Naive thymus-derived CD8-positive, alpha-beta T cell (primary cell): ENCODE measurements at regions of chr5 and their contacts with region 1.

Region 1: DNA sequence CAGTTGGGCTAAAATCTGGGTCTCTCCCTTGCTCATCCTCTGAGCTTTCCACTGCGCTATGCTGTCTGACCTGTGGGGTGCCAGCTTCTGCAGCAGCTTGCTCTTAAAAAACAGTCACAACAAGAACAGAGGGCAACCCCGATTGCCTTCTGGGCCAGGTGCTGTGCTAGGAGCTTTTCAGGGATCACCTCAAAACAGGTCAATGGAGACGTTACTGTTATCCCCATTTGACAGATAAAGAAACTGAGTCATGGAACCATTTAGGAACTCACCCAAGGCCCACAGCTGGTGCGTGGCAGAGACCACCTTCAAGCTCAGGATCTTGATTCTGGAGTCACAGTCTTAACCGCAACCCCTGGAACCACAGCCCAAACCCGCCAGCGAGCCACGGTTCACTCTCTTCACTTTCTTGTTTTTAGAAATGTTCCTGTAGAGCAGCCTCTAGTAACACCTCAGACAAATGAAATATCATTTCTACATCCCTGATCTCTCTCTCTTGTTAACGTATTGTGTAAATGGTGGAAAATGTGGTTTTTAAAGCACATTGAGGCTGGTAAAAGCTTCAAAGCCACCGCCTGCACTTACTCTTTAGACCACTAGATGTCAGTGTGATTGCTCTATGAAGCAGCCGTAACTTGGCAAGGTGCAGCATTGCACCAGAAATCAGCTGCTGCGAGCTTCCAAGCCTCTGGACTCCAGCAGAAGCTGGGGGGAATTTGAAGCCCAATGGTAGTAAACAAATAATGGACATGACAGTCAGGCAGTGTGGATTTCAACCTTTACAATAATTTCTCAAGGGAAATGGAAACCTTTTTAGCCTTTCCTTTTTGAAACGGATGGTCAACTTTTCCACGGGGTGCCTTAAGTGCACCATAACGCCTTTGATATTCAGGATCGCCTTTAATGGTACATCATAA is 1.7 kb downstream of the FYB1 start:
- DNase-seq: peak; percentile 53 to 90 (median 82)
- ATAC-seq: peak; percentile 72 to 73
- H3K4me3 Mint-ChIP-seq: peak overlapping the region; percentile 77 to 95 (median 84)
- H3K27ac Mint-ChIP-seq: peak overlapping the region; percentile 68 to 97 (median 92)
- H3K4me1 Mint-ChIP-seq: peaks cover 41 to 75% (median 61%) of the 10 kb centered on the region in 4 donors
- H3K27me3 Mint-ChIP-seq: no peaks in the 10 kb centered on the region

Region 2: DNA sequence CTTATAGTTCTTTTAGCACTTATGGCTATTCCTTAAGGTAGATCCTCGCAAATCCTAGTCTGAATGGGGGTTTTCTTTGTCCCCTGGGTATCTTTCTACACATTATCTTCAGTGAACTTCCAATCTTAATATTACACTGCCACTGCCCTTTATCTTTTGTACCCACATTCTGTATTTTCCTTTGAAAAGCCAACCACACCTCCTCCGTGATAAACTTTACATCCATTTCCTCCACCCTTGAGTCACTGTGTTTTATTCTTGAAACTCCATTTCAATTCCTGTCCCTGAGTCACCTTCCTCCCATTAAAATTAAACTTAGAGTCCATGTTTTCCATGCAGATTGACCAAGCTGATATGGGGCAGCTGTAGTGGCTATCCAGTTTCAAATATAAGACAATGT is 100.2 kb before region 1 on chr5:
- POLR2A ChIA-PET with region 1: no interaction called
- DNase-seq: no peak
- ATAC-seq: no peak
- H3K4me3 Mint-ChIP-seq: peak overlapping the region in 1 of 10 donors; percentile 42
- H3K27ac Mint-ChIP-seq: peak overlapping the region in 9 of 10 donors; percentile 64 to 92 (median 79)
- H3K4me1 Mint-ChIP-seq: peaks cover 15 to 35% (median 23%) of the 10 kb centered on the region in 4 donors
- H3K27me3 Mint-ChIP-seq: no peaks in the 10 kb centered on the region

Region 3: GRCh38 chr5:39158127-39158593 is 59.5 kb before region 1 on chr5:
- POLR2A ChIA-PET with region 1: interaction called, 10 read pairs
- DNase-seq: no peak
- ATAC-seq: no peak
- H3K4me3 Mint-ChIP-seq: peak overlapping the region in 7 of 10 donors; percentile 1 to 76 (median 56)
- H3K27ac Mint-ChIP-seq: peak overlapping the region; percentile 48 to 95 (median 76)
- H3K4me1 Mint-ChIP-seq: peaks cover 47 to 91% (median 83%) of the 10 kb centered on the region in 4 donors
- H3K27me3 Mint-ChIP-seq: no peaks in the 10 kb centered on the region

Region 4: GRCh38 chr5:39177631-39177964 is 40.0 kb before region 1 on chr5:
- POLR2A ChIA-PET with region 1: interaction called, 78 read pairs
- DNase-seq: peak in 4 of 10 donors; percentile 66 to 85 (median 74)
- ATAC-seq: peak; percentile 62 to 74
- H3K4me3 Mint-ChIP-seq: peak overlapping the region; percentile 63 to 87 (median 75)
- H3K27ac Mint-ChIP-seq: peak overlapping the region; percentile 90 to 98 (median 95)
- H3K4me1 Mint-ChIP-seq: peaks cover 50 to 99% (median 97%) of the 10 kb centered on the region in 4 donors
- H3K27me3 Mint-ChIP-seq: no peaks in the 10 kb centered on the region

Region 5: GRCh38 chr5:39194466-39195136 is 23.0 kb before region 1 on chr5:
- POLR2A ChIA-PET with region 1: interaction called, 124 read pairs
- DNase-seq: no peak
- ATAC-seq: no peak
- H3K4me3 Mint-ChIP-seq: peak overlapping the region; percentile 77 to 99 (median 89)
- H3K27ac Mint-ChIP-seq: peak overlapping the region; percentile 87 to 98 (median 96)
- H3K4me1 Mint-ChIP-seq: peaks cover 36 to 76% (median 70%) of the 10 kb centered on the region in 4 donors
- H3K27me3 Mint-ChIP-seq: no peaks in the 10 kb centered on the region

Region 6: GRCh38 chr5:39238366-39239105 is 20.9 kb after region 1 on chr5:
- POLR2A ChIA-PET with region 1: no interaction called
- DNase-seq: no peak
- ATAC-seq: no peak
- H3K4me3 Mint-ChIP-seq: no peak overlapping the region
- H3K27ac Mint-ChIP-seq: peak overlapping the region in 2 of 10 donors; percentile 4 to 74
- H3K4me1 Mint-ChIP-seq: peaks cover 0 to 14% (median 4%) of the 10 kb centered on the region in 4 donors
- H3K27me3 Mint-ChIP-seq: no peaks in the 10 kb centered on the region

Region 7: DNA sequence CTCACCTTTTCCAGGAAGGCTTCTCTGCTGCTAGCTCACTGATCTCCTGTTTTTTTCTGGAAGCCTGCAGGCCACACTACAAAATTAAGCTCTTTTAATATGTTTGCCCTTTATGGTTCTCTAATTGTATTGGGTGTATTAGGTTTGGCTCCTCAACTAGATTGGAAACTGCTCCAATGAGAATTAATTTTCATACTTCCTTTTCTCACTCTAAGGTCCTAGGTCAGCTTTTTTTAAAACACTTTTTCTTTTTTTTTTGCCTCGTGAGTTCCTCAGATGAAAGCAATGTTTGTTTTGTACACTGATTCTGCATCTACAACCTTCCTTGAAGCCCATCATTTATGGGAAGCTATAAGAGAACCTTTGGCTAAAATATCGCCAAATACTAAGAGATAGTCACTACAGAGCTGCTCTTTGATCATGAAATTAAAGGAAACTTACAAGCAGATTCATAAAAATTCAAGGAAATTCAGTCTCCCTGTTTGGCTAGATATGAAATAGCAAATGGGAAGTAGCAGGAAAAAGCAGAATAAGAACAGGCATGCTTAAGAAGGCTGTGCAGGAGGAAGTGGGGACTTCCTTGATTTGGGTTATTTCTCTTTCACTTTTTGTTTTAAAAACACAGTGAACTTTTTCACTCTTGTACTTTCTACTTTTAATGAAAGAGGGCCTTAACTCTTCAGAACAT is 56.9 kb after region 1 on chr5:
- POLR2A ChIA-PET with region 1: interaction called, 16 read pairs
- DNase-seq: peak in 3 of 10 donors; percentile 46 to 51 (median 46)
- ATAC-seq: peak; percentile 74 to 76
- H3K4me3 Mint-ChIP-seq: peak overlapping the region; percentile 73 to 91 (median 86)
- H3K27ac Mint-ChIP-seq: peak overlapping the region; percentile 94 to 100 (median 96)
- H3K4me1 Mint-ChIP-seq: peaks cover 17 to 62% (median 50%) of the 10 kb centered on the region in 4 donors
- H3K27me3 Mint-ChIP-seq: no peaks in the 10 kb centered on the region

Region 8: DNA sequence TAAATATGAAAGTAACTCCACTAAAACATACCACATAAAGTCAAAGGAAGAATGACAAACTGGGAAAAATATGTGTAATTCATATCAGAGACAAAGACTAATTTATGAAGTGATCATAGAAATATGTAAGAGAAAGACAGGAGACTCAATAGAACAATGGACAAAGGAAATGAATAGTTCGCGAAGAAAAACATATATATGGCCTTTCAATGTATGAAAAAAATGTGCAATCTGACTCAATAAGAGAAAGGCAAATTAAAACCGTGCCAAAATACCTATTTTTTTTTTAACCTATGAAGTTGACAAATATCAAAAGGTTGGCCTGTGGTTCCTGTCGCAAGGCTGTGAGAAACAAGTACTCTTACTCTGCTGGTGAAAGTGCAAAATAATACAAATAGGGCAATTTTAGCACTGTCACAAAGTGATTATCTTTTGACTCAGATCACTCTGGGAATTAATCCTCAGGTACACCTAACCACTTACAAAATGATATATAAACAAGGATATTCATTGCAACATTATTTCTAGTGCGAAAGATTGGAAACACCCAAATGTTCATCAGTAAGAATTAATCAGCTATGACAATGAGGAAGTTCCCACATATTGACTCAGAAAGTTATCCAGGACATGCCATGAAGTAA is 143.0 kb after region 1 on chr5:
- POLR2A ChIA-PET with region 1: no interaction called
- DNase-seq: no peak
- ATAC-seq: no peak
- H3K4me3 Mint-ChIP-seq: no peak overlapping the region
- H3K27ac Mint-ChIP-seq: no peak overlapping the region
- H3K4me1 Mint-ChIP-seq: no peaks in the 10 kb centered on the region
- H3K27me3 Mint-ChIP-seq: no peaks in the 10 kb centered on the region